ENCODE measurements at regions of chr13 and their contacts with region 1.

Region 1: DNA sequence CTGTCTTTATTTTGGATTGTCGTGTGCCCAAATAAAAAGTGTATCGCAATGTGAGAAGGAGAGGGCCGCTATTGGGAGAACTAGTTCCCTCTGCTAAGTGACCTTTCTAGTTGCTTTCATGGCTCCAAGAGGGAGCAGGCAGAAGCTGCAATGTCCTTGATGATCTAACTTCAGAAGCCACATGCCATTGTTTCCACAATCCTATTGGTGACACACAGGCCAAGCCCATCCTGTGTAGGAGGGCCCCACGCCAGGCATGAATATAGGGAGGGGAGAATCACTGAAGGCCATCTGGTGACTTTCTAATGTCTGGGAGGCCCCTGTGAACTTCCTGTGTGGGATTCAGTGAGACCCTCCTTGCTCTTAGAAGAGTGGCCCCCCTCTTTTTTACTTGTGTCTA is 47.8 kb upstream of the KPNA3 start:
- DNase-seq: peak in 1 of 2 experiments; percentile 48
- H3K4me3 ChIP-seq: no peak overlapping the region
- H3K4me3 Mint-ChIP-seq: no peak overlapping the region
- H3K27ac Mint-ChIP-seq: peak overlapping the region; percentile 37
- H3K4me1 ChIP-seq: peaks cover 50% of the 10 kb centered on the region
- H3K4me1 Mint-ChIP-seq: peaks cover 43% of the 10 kb centered on the region
- H3K27me3 ChIP-seq: no peaks in the 10 kb centered on the region
- H3K27me3 Mint-ChIP-seq: no peaks in the 10 kb centered on the region
- CTCF ChIP-seq: no peak

Region 2: GRCh38 chr13:49739498-49740187 is 100.6 kb before region 1 on chr13:
- CTCF ChIA-PET with region 1: no interaction called
- POLR2A ChIA-PET with region 1: no interaction called
- intact Hi-C with region 1: loop called (anchors 5 kb)
- DNase-seq: peak in 1 of 2 experiments; percentile 53
- H3K4me3 ChIP-seq: no peak overlapping the region
- H3K4me3 Mint-ChIP-seq: no peak overlapping the region
- H3K27ac Mint-ChIP-seq: no peak overlapping the region
- H3K4me1 ChIP-seq: peaks cover 32% of the 10 kb centered on the region
- H3K4me1 Mint-ChIP-seq: peaks cover 31% of the 10 kb centered on the region
- H3K27me3 ChIP-seq: no peaks in the 10 kb centered on the region
- H3K27me3 Mint-ChIP-seq: no peaks in the 10 kb centered on the region
- CTCF ChIP-seq: no peak

Region 3: DNA sequence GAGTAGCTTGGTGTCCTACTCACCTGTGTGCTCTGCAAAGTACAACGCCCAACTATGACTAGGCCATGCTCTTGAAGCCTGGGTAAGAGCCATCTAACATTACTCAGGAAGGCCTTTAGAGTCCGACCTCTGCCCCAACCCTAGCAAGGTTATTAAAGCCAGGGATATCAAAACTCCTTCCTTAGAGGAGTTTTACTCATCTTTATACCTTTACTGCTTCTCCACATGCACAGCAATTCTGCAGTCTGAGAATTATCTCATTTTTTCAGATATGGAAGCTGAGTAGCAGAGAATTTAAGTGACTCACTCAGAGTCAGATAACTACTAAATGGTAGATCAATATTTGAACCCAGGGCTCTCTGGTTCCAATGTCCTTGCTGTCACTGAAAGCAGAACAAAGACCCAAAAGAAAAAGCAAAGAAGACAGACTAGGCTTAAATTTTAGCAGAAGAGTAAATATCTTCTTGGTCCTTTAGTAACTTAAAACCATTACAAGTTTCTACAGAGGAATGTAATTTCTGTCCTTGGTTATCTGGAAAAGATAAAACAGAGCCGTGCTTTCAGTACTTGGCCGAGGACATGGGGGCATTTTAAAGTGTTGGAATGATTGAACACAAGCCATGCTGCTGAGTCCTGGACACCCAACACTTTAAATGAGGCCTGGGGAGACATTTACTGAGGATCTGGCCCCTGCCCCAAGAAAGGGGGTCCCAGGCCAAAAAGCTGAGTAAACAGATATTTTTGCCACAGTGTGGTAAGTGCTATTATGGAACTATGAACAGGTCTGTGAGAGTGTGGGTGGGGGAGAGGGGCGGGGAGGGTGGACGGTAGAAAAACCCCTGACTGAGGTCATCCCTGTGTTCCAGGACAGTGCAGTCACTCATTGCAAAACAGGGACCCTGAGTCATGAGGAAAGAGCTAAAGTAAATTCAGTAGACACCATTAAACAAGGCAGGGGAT is 29.4 kb before region 1 on chr13:
- CTCF ChIA-PET with region 1: no interaction called
- POLR2A ChIA-PET with region 1: no interaction called
- intact Hi-C with region 1: loop called (anchors 2 kb)
- DNase-seq: peak; percentile 76 to 89
- H3K4me3 ChIP-seq: no peak overlapping the region; the same call in 1 of the 2 replicates
- H3K4me3 Mint-ChIP-seq: peak overlapping the region; percentile 63
- H3K27ac Mint-ChIP-seq: peak overlapping the region; percentile 91
- H3K4me1 ChIP-seq: peaks cover 90% of the 10 kb centered on the region
- H3K4me1 Mint-ChIP-seq: peaks cover 49% of the 10 kb centered on the region
- H3K27me3 ChIP-seq: no peaks in the 10 kb centered on the region
- H3K27me3 Mint-ChIP-seq: no peaks in the 10 kb centered on the region
- CTCF ChIP-seq: no peak

Measured in Caco-2 (cell line).